ENCODE measurements at regions of chr15 and their contacts with region 1.

Region 1: DNA sequence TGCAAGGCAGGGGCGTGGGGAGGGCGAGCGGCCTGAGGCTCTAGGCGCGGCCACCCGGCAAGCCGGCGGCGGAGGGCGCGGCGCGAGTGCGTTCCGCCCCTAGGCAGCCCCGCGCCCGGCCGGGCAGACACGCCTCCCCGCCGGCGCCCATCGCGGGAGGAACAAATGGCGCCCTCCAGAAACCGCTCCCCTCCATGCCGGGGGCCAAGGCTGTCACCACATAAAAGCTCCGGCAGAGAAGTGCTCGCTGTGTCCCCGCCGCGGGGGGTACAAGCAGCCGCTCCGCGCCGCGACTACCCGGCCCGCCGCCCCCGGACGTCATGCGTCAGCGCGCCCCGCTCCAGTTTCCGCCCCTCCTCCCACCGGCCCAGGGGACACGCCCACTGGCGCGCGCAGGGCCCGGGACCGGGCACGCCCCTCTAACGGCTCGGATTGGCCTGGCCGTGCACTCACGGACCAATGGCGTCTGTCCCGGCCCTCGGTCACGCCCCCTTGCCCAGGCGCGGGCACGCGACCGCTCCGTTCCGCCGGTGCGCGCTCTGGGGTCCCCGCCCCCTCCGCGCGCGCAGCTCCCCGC is 391 bp upstream of the KLF13 start:
- DNase-seq: peak; percentile 97
- H3K4me3 ChIP-seq: peak overlapping the region; percentile 93
- H3K27ac ChIP-seq: peak overlapping the region; percentile 95
- H3K4me1 ChIP-seq: peaks cover 4% of the 10 kb centered on the region
- H3K27me3 ChIP-seq: no peaks in the 10 kb centered on the region
- CTCF ChIP-seq: no peak

Region 2: DNA sequence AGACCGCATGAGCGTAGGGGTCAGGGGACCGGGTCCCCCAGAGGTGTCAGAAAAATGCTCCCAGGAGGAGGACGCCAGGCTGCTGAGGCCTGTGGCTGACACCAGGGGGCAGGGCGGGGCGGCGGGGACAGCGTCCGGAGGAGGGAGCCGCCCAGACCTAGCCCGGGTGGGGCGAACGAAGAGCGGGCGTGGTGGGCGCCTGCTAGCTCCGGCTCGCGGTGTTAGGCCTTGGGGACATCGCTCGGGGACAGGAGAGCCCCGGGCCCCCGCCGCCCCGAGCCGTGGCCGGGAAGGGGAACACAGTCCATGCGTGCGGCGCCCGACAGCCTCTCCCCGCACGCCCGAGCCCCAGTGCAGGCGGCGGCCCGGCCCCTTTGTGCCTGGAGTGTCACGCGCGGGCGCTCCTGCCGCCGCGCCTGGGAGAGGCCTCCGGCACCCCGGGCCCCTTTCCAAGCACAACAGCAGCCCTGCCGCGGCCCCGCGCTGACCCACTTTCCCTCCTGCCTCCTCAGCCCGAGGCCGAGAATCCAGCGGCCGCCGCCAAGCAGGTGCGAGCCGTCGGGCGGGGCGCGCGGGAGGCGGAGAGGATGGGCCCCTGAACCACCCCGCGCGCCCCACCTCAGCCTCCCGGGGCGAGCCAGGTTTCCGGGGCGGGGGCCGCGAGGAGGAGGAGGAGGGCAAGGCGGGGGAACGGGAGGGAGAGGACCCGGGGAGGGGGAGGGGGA is 110.6 kb before region 1 on chr15:
- CTCF ChIA-PET with region 1: no interaction called
- POLR2A ChIA-PET with region 1: no interaction called
- intact Hi-C with region 1: loop called (anchors 1 kb)
- DNase-seq: peak; percentile 74
- H3K4me3 ChIP-seq: peak overlapping the region; percentile 57
- H3K27ac ChIP-seq: no peak overlapping the region
- H3K4me1 ChIP-seq: no peaks in the 10 kb centered on the region
- H3K27me3 ChIP-seq: no peaks in the 10 kb centered on the region
- CTCF ChIP-seq: peak; percentile 82

Region 3: DNA sequence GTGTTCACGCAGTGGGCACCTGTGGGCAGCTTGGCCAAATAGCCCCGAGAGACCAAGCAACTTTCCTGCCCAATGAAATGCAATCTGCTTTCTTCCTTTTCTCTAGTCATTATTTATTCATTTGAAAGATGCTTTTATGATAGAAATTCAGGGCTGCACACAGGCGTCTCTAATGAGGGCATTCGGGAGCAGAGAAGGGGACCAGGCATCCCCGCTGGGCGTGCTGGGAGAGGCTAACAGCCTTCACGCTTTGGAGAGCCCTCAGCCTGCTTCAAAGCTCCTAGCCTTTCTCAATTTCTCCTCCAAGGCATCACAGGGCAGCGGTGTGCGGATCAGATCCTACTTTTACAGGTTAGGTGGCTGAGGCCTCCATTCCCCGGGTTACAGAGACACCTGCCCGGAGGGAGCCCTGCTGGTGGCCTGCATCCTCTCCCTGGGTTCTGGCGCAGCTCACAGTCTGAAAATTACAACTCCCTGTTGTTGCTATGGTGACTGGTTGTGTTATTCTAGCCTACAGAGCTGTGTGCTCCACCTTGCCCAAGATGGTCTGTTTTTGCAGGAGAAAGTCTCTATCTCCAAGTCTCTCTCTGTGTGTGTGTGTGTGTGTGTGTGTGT is 21.4 kb before region 1 on chr15:
- CTCF ChIA-PET with region 1: no interaction called
- POLR2A ChIA-PET with region 1: no interaction called
- intact Hi-C with region 1: loop called (anchors 1 kb)
- DNase-seq: no peak
- H3K4me3 ChIP-seq: no peak overlapping the region
- H3K27ac ChIP-seq: no peak overlapping the region
- H3K4me1 ChIP-seq: peaks cover 16% of the 10 kb centered on the region
- H3K27me3 ChIP-seq: no peaks in the 10 kb centered on the region
- CTCF ChIP-seq: no peak

Region 4: DNA sequence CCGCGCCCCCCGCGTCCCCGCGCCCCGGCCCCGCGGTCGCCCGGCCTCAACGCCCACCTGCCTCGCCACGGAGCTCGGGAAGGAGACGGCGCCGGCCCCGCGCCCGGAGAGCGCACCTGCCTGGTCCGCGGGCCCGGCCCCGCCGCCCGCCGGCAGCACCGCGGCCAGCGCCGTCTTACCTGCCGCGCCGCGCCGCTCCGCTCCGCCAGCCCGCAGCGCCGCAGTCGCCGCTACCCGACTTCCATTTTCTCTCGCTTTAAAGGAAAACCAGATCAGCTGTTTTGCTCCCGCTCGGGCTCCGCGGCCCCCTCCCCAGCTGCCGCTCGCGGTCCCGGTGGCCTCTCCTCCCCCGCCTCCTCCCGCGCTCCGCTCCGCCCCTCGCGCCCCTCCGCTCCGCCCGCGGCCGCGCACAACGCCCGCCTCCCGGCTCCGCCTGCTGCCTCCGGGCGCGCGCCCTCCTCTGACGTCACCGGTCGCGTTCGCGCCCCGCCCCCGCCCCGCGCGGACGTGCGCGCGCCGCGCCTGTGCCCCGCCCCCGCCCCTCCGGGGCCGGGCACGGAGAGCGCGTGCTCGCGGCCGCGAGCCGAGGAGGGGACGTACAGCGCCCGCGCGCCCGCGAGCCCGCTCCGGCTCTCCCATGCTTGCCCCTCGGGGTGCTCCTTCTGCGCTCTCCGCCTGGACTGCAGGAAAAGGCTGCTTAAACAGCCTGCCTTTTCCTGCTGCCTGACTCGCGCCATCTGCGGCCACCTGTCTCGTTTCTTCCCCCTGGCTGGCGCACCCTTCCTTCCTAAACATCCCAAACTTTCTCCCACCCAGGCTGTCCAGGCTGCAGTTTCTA is 544.3 kb after region 1 on chr15:
- CTCF ChIA-PET with region 1: no interaction called
- POLR2A ChIA-PET with region 1: no interaction called
- intact Hi-C with region 1: loop called (anchors 10 kb)
- DNase-seq: peak; percentile 88
- H3K4me3 ChIP-seq: peak within 1 kb of the TSS; percentile 54
- H3K27ac ChIP-seq: no peak within 1 kb of the TSS
- H3K4me1 ChIP-seq: no peaks in the 10 kb centered on the region
- H3K27me3 ChIP-seq: peaks cover 3% of the 10 kb centered on the region
- CTCF ChIP-seq: no peak